ENCODE measurements at regions of chr12 and their contacts with region 1.

Region 1: GRCh38 chr12:111024205-111024801 is 103.9 kb upstream of the MYL2 start:
- DNase-seq: peak; percentile 44
- ATAC-seq: peak; percentile 99
- H3K4me3 ChIP-seq: no peak overlapping the region
- H3K27ac ChIP-seq: no peak overlapping the region
- H3K4me1 ChIP-seq: no peaks in the 10 kb centered on the region
- H3K27me3 ChIP-seq: peaks cover 0 to 11% of the 10 kb centered on the region in 2 experiments; a peak in 3 of 5 replicates
- CTCF ChIP-seq: peak; percentile 92
- EP300 ChIP-seq: no peak
- POLR2A ChIP-seq: no peak
- RAD21 ChIP-seq: peak; percentile 91

Region 2: GRCh38 chr12:110860833-110861296 is 163.4 kb before region 1 on chr12:
- CTCF ChIA-PET with region 1: no interaction called
- POLR2A ChIA-PET with region 1: no interaction called
- in situ Hi-C with region 1: no loop called
- intact Hi-C with region 1: no loop called
- DNase-seq: no peak
- ATAC-seq: no peak
- H3K4me3 ChIP-seq: no peak overlapping the region
- H3K27ac ChIP-seq: no peak overlapping the region
- H3K4me1 ChIP-seq: peaks cover 3% of the 10 kb centered on the region; the same call in 1 of the 2 replicates
- H3K27me3 ChIP-seq: peaks cover 0 to 14% of the 10 kb centered on the region in 2 experiments; a peak in 4 of 5 replicates
- CTCF ChIP-seq: no peak
- EP300 ChIP-seq: no peak
- POLR2A ChIP-seq: no peak
- RAD21 ChIP-seq: no peak

Region 3: DNA sequence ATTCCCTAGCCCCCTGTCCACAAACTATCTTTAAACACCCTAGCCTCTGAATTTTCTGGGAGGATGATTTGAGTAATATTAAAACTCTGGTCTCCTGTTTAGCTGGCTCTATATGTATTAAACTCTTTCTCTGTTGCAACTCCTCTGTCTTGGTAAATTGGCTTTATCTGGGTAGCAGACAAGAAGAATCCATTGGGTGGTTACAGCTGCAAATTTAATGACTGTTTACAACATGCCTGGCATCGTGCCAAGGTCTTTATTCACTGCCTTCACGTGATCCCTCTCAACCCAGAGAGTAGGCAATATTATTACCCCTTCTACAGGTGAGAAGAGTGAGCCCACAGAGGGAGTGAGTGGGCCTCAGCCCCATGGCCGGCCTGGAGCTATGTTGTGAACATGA is 26.1 kb before region 1 on chr12:
- CTCF ChIA-PET with region 1: no interaction called
- POLR2A ChIA-PET with region 1: no interaction called
- in situ Hi-C with region 1: no loop called
- intact Hi-C with region 1: no loop called
- DNase-seq: no peak
- ATAC-seq: no peak
- H3K4me3 ChIP-seq: no peak overlapping the region
- H3K27ac ChIP-seq: no peak overlapping the region
- H3K4me1 ChIP-seq: no peaks in the 10 kb centered on the region
- H3K27me3 ChIP-seq: peaks cover 0 to 2% of the 10 kb centered on the region in 2 experiments; a peak in 1 of 5 replicates
- CTCF ChIP-seq: no peak
- EP300 ChIP-seq: no peak
- POLR2A ChIP-seq: no peak
- RAD21 ChIP-seq: no peak

Region 4: DNA sequence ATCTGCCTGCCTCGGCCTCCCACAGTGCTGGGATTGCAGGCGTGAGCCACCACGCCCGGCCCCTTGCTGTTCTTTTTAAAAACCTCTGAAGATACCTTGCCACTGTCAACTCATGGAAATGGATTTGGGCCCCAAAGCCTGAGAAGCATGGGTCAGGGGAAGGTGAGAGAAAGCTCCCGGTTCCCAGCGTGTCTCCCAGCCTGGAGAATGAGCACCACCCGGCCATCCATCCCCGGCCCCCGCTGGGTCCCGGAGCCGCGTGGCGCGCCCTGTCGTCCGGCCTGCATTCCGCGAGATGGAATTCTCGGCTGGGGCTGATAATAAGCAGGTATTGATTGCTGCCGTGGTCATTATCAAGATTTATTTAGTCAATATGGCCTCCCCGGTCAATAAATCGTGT is 22.6 kb after region 1 on chr12:
- CTCF ChIA-PET with region 1: no interaction called
- POLR2A ChIA-PET with region 1: no interaction called
- in situ Hi-C with region 1: no loop called
- intact Hi-C with region 1: no loop called
- DNase-seq: no peak
- ATAC-seq: no peak
- H3K4me3 ChIP-seq: no peak overlapping the region
- H3K27ac ChIP-seq: no peak overlapping the region
- H3K4me1 ChIP-seq: no peaks in the 10 kb centered on the region
- H3K27me3 ChIP-seq: no peaks in the 10 kb centered on the region
- CTCF ChIP-seq: no peak
- EP300 ChIP-seq: no peak
- POLR2A ChIP-seq: no peak
- RAD21 ChIP-seq: no peak

Region 5: GRCh38 chr12:111174251-111174960 is 150.1 kb after region 1 on chr12:
- CTCF ChIA-PET with region 1: interaction called, 7 read pairs
- POLR2A ChIA-PET with region 1: no interaction called
- in situ Hi-C with region 1: no loop called
- intact Hi-C with region 1: loop called (anchors 5 kb)
- DNase-seq: no peak
- ATAC-seq: peak; percentile 52; the same call in 2 of the 3 replicates
- H3K4me3 ChIP-seq: no peak overlapping the region
- H3K27ac ChIP-seq: no peak overlapping the region
- H3K4me1 ChIP-seq: no peaks in the 10 kb centered on the region
- H3K27me3 ChIP-seq: peaks cover 5 to 16% of the 10 kb centered on the region in 2 experiments; a peak in 2 of 5 replicates
- CTCF ChIP-seq: peak; percentile 53
- EP300 ChIP-seq: no peak
- POLR2A ChIP-seq: no peak
- RAD21 ChIP-seq: no peak

Region 6: DNA sequence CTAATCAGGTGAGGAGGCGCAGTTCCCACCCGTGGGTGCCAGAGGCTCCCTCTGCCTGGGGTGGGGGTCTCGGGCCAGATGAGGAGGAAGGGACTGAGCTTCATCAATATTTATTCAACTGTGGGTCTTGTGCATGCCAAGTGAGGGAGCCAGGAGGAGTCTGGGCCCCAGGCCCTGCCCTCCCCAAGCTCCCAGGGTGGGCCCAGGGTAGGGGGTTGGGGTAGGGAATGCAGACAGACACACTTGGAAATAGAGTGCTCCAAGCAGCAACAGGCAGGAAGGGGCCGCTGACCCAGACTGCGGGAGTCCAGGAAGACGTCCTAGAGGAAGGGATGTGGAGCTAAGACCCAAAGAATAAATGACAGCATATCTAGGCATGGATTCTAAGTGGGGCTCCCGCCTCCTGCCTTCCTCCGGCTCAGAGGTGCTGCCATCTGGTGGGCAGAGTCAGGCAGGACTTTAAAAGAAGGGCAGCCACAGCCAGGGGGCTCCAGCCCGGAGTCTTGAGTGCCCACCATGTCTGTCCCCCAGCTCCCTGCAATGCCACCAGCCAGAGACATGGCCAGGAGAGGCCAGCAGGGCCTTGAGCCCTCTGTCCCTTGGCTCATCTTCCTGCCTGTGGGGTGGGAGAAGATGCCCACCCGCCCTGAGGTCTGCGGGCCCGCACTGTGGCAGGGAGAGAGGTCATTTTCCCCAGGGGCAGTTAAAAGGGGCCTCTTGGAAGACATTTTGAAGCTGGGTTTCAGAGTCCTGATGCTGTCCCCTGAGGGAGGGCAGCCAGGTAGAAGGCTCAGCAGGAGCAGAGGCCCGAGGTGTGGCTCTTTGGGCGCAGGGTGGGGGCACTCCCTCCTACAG is 274.5 kb after region 1 on chr12:
- CTCF ChIA-PET with region 1: interaction called, 12 read pairs
- POLR2A ChIA-PET with region 1: no interaction called
- in situ Hi-C with region 1: loop called (anchors 5 kb)
- intact Hi-C with region 1: loop called (anchors 1 kb)
- DNase-seq: peak; percentile 41
- ATAC-seq: peak; percentile 91
- H3K4me3 ChIP-seq: no peak overlapping the region
- H3K27ac ChIP-seq: no peak overlapping the region
- H3K4me1 ChIP-seq: no peaks in the 10 kb centered on the region
- H3K27me3 ChIP-seq: peaks cover 0 to 4% of the 10 kb centered on the region in 2 experiments; a peak in 1 of 5 replicates
- CTCF ChIP-seq: peak; percentile 85
- EP300 ChIP-seq: no peak
- POLR2A ChIP-seq: no peak
- RAD21 ChIP-seq: no peak; the same call in 1 of the 2 replicates

Region 7: GRCh38 chr12:111313833-111314259 is 289.5 kb after region 1 on chr12:
- CTCF ChIA-PET with region 1: interaction called, 15 read pairs
- POLR2A ChIA-PET with region 1: no interaction called
- in situ Hi-C with region 1: no loop called
- intact Hi-C with region 1: loop called (anchors 1 kb)
- DNase-seq: peak; percentile 59
- ATAC-seq: peak; percentile 88
- H3K4me3 ChIP-seq: no peak overlapping the region
- H3K27ac ChIP-seq: no peak overlapping the region
- H3K4me1 ChIP-seq: no peaks in the 10 kb centered on the region
- H3K27me3 ChIP-seq: peaks cover 2 to 11% of the 10 kb centered on the region in 2 experiments; a peak in 3 of 5 replicates
- CTCF ChIP-seq: peak; percentile 91
- EP300 ChIP-seq: no peak
- POLR2A ChIP-seq: no peak
- RAD21 ChIP-seq: peak; percentile 75